ENCODE measurements at regions of chr1 and their contacts with region 1.

Region 1: DNA sequence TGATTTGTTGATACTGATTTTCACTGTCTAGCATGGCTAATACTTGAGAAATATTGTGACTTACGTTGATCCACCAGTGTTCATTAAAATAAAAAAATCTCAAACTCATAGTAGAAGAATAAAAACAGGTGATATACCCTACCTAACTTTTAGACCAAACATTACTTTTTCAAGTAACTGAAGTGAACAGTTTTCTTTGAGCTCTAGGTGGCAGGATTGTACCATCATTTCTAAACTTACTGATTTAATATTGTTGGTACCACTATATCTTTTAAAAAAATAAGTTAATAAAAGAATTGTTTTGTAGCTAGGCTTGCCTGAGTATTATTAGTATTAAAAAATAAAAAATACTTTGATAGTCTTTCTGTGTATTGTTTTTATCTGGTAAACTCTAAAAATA is 21.5 kb downstream of the CDC73 start:
- DNase-seq: peak in 1 of 35 experiments; percentile 34
- ATAC-seq: no peak
- H3K4me3 ChIP-seq: no peak overlapping the region
- H3K4me3 Mint-ChIP-seq: no peak overlapping the region
- H3K27ac ChIP-seq: no peak overlapping the region
- H3K27ac Mint-ChIP-seq: peak overlapping the region in 1 of 2 donors; percentile 31
- H3K4me1 ChIP-seq: no peaks in the 10 kb centered on the region
- H3K4me1 Mint-ChIP-seq: peaks cover 26 to 33% (median 29%) of the 10 kb centered on the region in 3 donors
- H3K27me3 ChIP-seq: no peaks in the 10 kb centered on the region
- H3K27me3 Mint-ChIP-seq: no peaks in the 10 kb centered on the region

Region 2: DNA sequence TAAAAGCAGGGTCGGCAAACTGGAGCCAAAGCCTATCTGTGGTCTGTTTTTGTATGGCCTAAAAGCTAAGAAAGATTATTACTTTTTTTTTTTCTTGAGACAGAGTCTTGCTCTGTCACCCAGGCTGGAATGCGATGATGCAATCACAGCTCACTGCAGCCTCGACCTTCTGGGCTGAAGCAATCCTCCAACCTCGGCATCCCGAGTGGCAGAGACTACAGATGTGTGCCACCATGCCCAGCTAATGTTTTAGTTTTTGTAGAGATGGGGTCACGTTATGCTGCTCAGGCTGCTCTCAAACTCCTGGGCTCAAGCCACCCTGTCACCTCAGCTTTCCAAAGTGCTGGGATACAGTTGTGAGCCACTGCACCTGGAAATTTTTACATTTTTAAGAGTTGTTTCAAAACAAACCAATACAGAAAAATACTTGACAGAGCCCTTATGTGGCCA is 31.6 kb before region 1 on chr1:
- CTCF ChIA-PET with region 1: no interaction called
- POLR2A ChIA-PET with region 1: no interaction called
- DNase-seq: no peak
- ATAC-seq: no peak
- H3K4me3 ChIP-seq: no peak overlapping the region
- H3K4me3 Mint-ChIP-seq: no peak overlapping the region
- H3K27ac ChIP-seq: no peak overlapping the region
- H3K27ac Mint-ChIP-seq: no peak overlapping the region
- H3K4me1 ChIP-seq: no peaks in the 10 kb centered on the region
- H3K4me1 Mint-ChIP-seq: no peaks in the 10 kb centered on the region
- H3K27me3 ChIP-seq: no peaks in the 10 kb centered on the region
- H3K27me3 Mint-ChIP-seq: no peaks in the 10 kb centered on the region

Region 3: DNA sequence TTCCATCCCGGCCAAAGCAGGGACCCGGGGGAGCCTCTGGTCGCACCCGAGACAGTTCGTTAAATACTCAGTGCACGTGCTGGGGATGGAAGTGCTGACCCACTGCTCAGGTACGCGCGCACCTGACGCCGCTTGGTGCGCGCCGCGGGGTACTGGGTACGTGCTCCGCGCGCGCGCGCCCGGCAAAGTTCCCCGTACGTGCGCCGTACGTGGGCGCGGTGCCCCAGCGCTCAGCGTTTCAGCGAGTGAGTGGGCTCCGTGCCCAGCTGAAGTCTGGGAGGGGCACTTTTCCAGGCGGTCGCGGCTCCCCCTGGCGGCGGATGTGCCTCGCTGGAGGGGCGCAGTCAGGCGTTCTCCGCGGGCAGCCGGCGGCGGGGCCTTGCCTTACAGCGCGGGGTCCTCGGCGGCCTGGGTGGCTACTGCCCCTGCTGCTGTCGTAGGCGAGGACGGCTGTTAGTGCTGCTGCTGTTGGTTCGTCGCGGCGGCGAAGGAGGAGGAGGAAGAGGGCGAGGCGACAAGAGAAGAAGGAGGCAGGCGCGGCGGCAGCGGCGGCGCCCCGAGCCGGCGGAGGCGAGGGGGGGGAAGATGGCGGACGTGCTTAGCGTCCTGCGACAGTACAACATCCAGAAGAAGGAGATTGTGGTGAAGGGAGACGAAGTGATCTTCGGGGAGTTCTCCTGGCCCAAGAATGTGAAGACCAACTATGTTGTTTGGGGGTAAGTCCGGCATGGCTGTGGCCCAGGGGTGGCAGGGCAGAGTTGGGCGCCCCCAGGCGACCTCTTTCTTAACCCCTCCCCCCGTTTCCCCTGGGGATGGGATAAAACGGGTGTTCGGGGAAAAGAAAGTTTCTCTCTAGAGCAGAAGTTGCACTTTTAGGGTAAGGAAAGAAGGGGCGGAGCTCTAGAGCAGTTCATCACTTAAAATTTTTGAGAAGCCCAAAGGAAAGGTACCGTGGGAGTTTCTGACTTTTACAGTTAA is 21.4 kb before region 1 on chr1 and contains the start of gene CDC73:
- CTCF ChIA-PET with region 1: interaction called in 1 of 2 experiments, 9 read pairs
- POLR2A ChIA-PET with region 1: interaction called, 3 to 10 read pairs
- DNase-seq: peak; percentile 97 to 100 (median 98)
- ATAC-seq: peak; percentile 92 to 94 (median 93)
- H3K4me3 ChIP-seq: peak within 1 kb of the TSS; percentile 94 to 99
- H3K4me3 Mint-ChIP-seq: peak within 1 kb of the TSS; percentile 93 to 96 (median 96)
- H3K27ac ChIP-seq: peak within 1 kb of the TSS; percentile 98
- H3K27ac Mint-ChIP-seq: peak within 1 kb of the TSS; percentile 98
- H3K4me1 ChIP-seq: peaks cover 20 to 22% of the 10 kb centered on the region in 2 experiments
- H3K4me1 Mint-ChIP-seq: peaks cover 42 to 58% (median 52%) of the 10 kb centered on the region in 3 donors
- H3K27me3 ChIP-seq: no peaks in the 10 kb centered on the region
- H3K27me3 Mint-ChIP-seq: no peaks in the 10 kb centered on the region
- total RNA-seq, gene CDC73: 54.1 to 64.4 (median 57.4) TPM

Region 4: DNA sequence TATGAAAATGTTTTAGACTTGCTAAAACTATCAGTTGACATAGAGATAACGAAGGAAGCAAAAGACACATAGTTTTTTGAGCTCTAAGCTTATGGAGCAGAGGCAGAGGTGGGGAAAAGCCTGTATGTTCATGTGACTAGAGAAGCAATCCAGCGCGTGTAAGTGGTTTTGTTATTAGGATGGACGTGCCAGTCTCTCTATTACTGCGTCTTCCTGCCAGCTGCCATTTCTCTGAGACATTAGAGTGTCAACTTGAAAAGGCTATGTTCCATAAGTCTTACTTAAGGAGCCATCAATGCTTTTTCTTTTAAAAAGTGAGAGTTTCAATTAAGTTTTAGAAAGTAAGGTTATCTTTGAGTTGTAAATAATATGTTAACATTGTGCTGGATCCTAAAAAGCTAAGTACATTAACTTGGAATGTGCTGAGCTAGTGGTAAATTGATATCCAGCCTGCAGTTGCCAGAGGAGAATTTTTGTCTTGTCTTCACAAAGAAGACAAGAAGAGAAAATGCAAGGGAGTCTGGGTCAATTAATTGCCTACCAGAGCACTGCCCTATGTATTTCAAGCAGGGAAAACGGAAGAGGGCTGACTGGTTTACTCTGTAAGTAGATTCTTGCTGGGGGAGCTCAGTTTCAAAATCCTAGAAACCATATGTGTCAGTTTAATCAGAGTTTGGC is 204.9 kb after region 1 on chr1:
- CTCF ChIA-PET with region 1: interaction called in 1 of 2 experiments, 4 read pairs
- POLR2A ChIA-PET with region 1: interaction called in 1 of 2 experiments, 13 read pairs
- DNase-seq: no peak
- ATAC-seq: no peak
- H3K4me3 ChIP-seq: no peak overlapping the region
- H3K4me3 Mint-ChIP-seq: no peak overlapping the region
- H3K27ac ChIP-seq: no peak overlapping the region
- H3K27ac Mint-ChIP-seq: no peak overlapping the region
- H3K4me1 ChIP-seq: no peaks in the 10 kb centered on the region
- H3K4me1 Mint-ChIP-seq: no peaks in the 10 kb centered on the region
- H3K27me3 ChIP-seq: no peaks in the 10 kb centered on the region
- H3K27me3 Mint-ChIP-seq: no peaks in the 10 kb centered on the region

Region 5: DNA sequence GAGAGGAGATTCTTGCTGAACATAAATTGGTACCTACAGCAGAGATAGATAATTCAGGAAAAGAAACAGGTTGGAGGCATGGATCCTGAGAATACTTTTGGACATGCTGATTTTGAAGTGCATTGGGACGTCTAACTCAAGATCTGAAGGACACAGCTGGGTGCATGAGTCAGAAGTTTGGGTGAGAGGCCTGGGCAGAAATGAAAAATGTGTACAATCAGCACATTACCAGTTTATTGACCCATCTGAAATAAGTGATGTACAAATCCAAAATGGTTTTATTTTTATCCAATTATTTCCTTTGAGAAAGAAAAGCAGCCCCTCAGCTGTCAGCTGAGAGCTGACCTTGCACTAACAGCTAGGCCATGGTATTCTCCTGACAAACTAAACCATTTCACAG is 1018.3 kb after region 1 on chr1:
- CTCF ChIA-PET with region 1: no interaction called
- POLR2A ChIA-PET with region 1: interaction called in 1 of 2 experiments, 10 read pairs
- DNase-seq: no peak
- ATAC-seq: no peak
- H3K4me3 ChIP-seq: no peak overlapping the region
- H3K4me3 Mint-ChIP-seq: no peak overlapping the region
- H3K27ac ChIP-seq: no peak overlapping the region
- H3K27ac Mint-ChIP-seq: peak overlapping the region; percentile 4 to 24
- H3K4me1 ChIP-seq: no peaks in the 10 kb centered on the region
- H3K4me1 Mint-ChIP-seq: peaks cover 4 to 6% (median 4%) of the 10 kb centered on the region in 3 donors
- H3K27me3 ChIP-seq: no peaks in the 10 kb centered on the region
- H3K27me3 Mint-ChIP-seq: no peaks in the 10 kb centered on the region